HCT116 (cell line): ENCODE measurements at regions of chr2 and their contacts with region 1.

Region 1: DNA sequence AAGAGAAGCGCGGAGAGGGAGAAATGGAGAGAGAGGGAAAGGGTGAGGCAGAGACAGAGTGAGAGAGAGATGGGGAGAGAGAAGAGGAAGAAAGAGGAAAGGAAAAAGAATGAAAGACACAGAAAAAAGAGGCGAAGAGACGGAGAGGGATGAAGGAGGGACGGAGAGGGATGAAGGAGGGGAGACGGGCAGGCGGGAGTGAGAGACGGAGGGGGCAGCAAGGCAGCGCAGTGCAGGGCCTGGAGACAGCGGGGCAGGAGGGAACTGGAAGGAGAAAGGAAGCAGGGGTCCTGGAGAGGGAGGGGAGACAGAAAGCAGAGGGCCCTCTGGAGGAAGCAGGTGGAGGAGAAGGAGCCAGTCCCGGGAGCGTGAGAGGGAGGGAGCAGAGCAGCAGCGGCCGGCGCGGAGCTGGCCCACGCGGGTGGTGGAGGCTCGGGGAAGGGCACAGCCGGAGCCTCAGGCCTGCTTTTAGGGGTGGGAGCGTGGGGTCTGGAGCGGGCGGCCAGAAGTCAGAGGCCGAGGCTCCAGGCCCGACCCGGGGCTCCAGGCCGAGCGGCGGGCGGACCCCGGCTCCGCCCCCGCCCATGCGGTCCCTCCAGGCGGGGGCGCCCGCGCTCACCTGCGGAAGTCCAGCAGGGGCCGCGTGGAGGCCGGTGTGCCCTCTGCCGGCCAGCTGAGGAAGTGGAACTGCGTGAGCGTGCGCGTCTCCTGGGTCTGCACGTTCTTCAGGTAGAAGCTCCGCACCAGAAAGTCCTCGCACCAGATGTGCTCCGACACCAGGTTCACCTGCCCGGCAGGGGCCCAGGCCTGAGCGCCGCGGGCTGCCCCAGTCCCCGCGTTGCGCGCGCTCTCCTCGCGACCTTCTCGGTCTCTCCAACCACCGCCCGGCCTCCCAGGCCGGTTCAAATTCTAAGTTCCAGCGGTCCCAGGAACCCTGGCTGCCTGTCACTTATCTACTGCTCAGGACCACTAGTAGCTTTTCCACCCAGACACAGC is 14.5 kb downstream of the PTPRN start:
- DNase-seq: peak; percentile 78
- ATAC-seq: peak; percentile 86
- H3K4me3 ChIP-seq: peak overlapping the region; percentile 33 to 50
- H3K27ac ChIP-seq: peak overlapping the region; percentile 25; the same call in 1 of the 2 replicates
- H3K4me1 ChIP-seq: peaks cover 7 to 20% of the 10 kb centered on the region in 2 experiments; a peak in 3 of 4 replicates
- H3K27me3 ChIP-seq: no peaks in the 10 kb centered on the region
- CTCF ChIP-seq: peak; percentile 94 to 99 (median 98)
- POLR2A ChIP-seq: no peak
- RAD21 ChIP-seq: peak; percentile 83

Region 2: GRCh38 chr2:219057709-219058540 is 236.7 kb before region 1 on chr2:
- CTCF ChIA-PET with region 1: interaction called, 5 read pairs
- POLR2A ChIA-PET with region 1: no interaction called
- RAD21 ChIA-PET with region 1: no interaction called
- intact Hi-C with region 1: loop called (anchors 5 kb)
- DNase-seq: peak; percentile 26
- ATAC-seq: peak; percentile 97
- H3K4me3 ChIP-seq: no peak overlapping the region
- H3K27ac ChIP-seq: no peak overlapping the region
- H3K4me1 ChIP-seq: no peaks in the 10 kb centered on the region
- H3K27me3 ChIP-seq: peaks cover 16% of the 10 kb centered on the region; the same call in 1 of the 2 replicates
- CTCF ChIP-seq: peak; percentile 83 to 92 (median 87)
- POLR2A ChIP-seq: no peak
- RAD21 ChIP-seq: peak; percentile 96

Region 3: GRCh38 chr2:219171231-219171651 is 123.4 kb before region 1 on chr2:
- CTCF ChIA-PET with region 1: interaction called, 16 read pairs
- POLR2A ChIA-PET with region 1: no interaction called
- RAD21 ChIA-PET with region 1: interaction called in 1 of 2 experiments, 3 read pairs
- intact Hi-C with region 1: loop called (anchors 2 kb)
- DNase-seq: peak; percentile 18
- ATAC-seq: peak; percentile 81
- H3K4me3 ChIP-seq: no peak overlapping the region
- H3K27ac ChIP-seq: no peak overlapping the region
- H3K4me1 ChIP-seq: peaks cover 5 to 8% of the 10 kb centered on the region in 2 experiments
- H3K27me3 ChIP-seq: no peaks in the 10 kb centered on the region
- CTCF ChIP-seq: peak in 2 of 3 experiments; percentile 73 to 80; a peak in 4 of 6 replicates
- POLR2A ChIP-seq: no peak
- RAD21 ChIP-seq: no peak

Region 4: GRCh38 chr2:219218732-219219701 is 75.6 kb before region 1 on chr2 and contains the start of gene ABCB6:
- CTCF ChIA-PET with region 1: interaction called, 12 read pairs
- POLR2A ChIA-PET with region 1: interaction called, 4 read pairs
- RAD21 ChIA-PET with region 1: no interaction called
- intact Hi-C with region 1: no loop called
- DNase-seq: peak; percentile 70
- ATAC-seq: peak; percentile 80
- H3K4me3 ChIP-seq: peak within 1 kb of the TSS; percentile 56 to 70
- H3K27ac ChIP-seq: peak within 1 kb of the TSS; percentile 81
- H3K4me1 ChIP-seq: peaks cover 9 to 37% of the 10 kb centered on the region in 2 experiments; a peak in 3 of 4 replicates
- H3K27me3 ChIP-seq: no peaks in the 10 kb centered on the region
- CTCF ChIP-seq: no peak
- POLR2A ChIP-seq: no peak
- RAD21 ChIP-seq: no peak
- total RNA-seq, gene ABCB6: 24.5 TPM

Region 5: DNA sequence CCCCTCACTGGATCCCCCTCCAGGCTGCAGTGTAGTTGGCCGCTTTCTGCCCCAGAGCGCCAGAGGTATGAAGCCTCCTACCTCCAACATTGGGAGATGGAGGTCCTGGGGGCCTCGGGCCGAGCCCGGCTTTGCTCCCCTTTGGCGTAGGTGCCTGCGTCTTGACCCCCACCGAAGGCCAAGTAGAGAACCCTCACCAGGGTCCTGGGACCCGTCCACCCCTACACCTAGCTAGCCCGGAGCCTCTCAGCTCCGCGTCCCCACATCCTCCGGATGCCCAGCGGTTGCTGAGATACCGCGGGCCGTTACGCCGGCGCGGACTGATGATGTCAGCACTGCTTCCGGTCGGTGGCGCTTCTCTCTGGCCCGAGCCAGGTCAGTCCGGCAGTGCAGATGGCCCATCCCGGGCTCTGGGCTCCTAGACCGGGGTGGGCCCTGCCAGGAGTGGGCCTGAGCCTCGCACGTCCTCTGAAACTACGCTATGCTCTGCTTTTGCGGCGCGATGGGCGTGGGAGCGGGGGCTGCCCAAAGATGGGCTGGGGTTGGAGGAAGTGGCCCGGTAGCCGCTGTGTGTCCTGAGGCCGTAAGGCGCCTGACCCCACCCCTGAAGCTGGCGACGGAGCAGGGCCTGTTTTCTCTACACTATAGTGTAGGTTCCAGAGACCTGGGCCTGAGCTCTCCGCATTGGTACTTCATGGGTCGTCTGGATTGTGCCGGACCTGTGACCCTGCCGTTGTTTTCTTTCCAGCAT is 49.3 kb before region 1 on chr2 and contains the starts of genes GLB1L and STK16:
- CTCF ChIA-PET with region 1: interaction called, 19 read pairs
- POLR2A ChIA-PET with region 1: interaction called, 3 read pairs
- RAD21 ChIA-PET with region 1: no interaction called
- intact Hi-C with region 1: no loop called
- DNase-seq: peak; percentile 83
- ATAC-seq: peak; percentile 90
- H3K4me3 ChIP-seq: peak within 1 kb of the TSS; percentile 80 to 96
- H3K27ac ChIP-seq: peak within 1 kb of the TSS; percentile 79
- H3K4me1 ChIP-seq: peaks cover 27 to 39% of the 10 kb centered on the region in 2 experiments
- H3K27me3 ChIP-seq: no peaks in the 10 kb centered on the region
- CTCF ChIP-seq: no peak
- POLR2A ChIP-seq: peak; percentile 72
- RAD21 ChIP-seq: no peak
- total RNA-seq, gene GLB1L: 6.6 TPM
- total RNA-seq, gene STK16: 31.4 TPM

Region 6: GRCh38 chr2:219278655-219279516 is 15.8 kb before region 1 on chr2 and contains the start of gene DNAJB2:
- CTCF ChIA-PET with region 1: interaction called, 71 read pairs
- POLR2A ChIA-PET with region 1: interaction called, 6 read pairs
- RAD21 ChIA-PET with region 1: no interaction called
- intact Hi-C with region 1: loop called (anchors 1 kb)
- DNase-seq: peak; percentile 94
- ATAC-seq: peak; percentile 85
- H3K4me3 ChIP-seq: peak within 1 kb of the TSS; percentile 59 to 65
- H3K27ac ChIP-seq: peak within 1 kb of the TSS; percentile 82
- H3K4me1 ChIP-seq: peaks cover 34 to 55% of the 10 kb centered on the region in 2 experiments
- H3K27me3 ChIP-seq: no peaks in the 10 kb centered on the region
- CTCF ChIP-seq: no peak
- POLR2A ChIP-seq: no peak
- RAD21 ChIP-seq: no peak
- total RNA-seq, gene DNAJB2: 36.2 TPM